ENCODE measurements at regions of chr12 and their contacts with region 1.

Region 1: DNA sequence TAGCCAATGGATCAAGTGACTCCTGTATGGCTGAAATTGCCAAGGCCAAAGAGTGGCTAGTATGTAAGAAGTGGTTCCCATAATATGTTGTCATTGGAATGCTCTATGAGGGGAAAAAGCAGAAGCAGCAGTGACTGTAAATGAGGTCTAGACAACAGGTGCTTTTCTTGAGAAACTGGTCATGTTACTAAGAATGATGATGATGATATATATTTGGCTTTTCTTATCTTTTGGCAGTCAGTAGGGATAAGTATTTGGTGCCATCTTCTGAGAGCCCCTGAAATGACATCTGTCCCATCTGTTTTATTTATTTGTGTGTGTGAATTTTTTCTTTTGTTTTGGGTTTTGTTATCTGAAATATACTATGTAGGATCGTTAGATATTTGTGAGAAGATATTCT is 141.7 kb downstream of the SYT1 start:
- DNase-seq: no peak
- H3K4me3 ChIP-seq: no peak overlapping the region
- H3K27ac ChIP-seq: no peak overlapping the region
- H3K4me1 ChIP-seq: no peaks in the 10 kb centered on the region
- H3K27me3 ChIP-seq: no peaks in the 10 kb centered on the region
- CTCF ChIP-seq: no peak
- POLR2A ChIP-seq: no peak

Region 2: DNA sequence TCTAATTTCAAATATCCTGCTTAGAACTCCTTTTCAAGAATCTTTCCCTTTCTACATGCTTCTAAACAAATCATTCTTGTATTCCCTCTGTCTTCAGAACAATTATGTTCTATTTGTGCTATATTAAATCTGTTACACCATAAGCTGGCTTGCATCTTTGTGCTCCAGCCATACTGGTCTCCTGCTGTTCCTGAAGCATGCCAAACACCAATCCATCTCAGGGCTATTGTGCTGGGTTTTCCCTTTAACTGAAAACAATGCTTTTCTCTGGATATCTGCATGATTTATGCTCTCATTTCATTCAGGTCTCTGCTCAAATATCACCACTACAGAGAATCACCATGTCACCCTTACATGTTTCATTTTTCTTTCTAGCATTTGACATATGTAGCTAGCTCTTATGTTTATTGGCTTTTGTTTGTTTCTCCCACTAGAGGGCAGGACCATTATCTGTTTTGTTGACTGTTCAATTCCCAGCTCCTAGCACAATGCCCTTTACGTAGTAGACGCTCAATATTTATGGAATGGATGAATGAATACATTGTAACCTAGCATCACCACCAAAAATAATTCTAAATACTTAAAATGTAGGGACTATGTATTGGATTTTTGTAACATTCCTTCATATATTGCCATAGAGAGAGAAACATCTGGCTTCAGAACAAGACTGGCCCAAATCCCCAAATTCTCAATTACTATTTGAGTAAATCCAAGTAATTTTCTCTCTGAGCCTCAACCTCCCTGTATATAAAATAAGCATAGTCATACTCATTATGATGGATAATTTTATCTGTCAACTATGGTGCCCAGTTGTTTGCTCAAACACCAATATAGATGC is 443.7 kb before region 1 on chr12:
- CTCF ChIA-PET with region 1: interaction called, 4 read pairs
- POLR2A ChIA-PET with region 1: no interaction called
- dilution Hi-C with region 1: no loop called
- intact Hi-C with region 1: loop called (anchors 5 kb)
- DNase-seq: peak; percentile 46
- H3K4me3 ChIP-seq: no peak overlapping the region
- H3K27ac ChIP-seq: no peak overlapping the region
- H3K4me1 ChIP-seq: no peaks in the 10 kb centered on the region
- H3K27me3 ChIP-seq: peaks cover 5% of the 10 kb centered on the region in 2 experiments
- CTCF ChIP-seq: peak in 1 of 2 donors; percentile 32
- POLR2A ChIP-seq: no peak

Region 3: GRCh38 chr12:79069009-79069408 is 62.7 kb after region 1 on chr12:
- CTCF ChIA-PET with region 1: no interaction called
- POLR2A ChIA-PET with region 1: no interaction called
- dilution Hi-C with region 1: no loop called
- intact Hi-C with region 1: no loop called
- DNase-seq: no peak
- H3K4me3 ChIP-seq: no peak overlapping the region
- H3K27ac ChIP-seq: no peak overlapping the region
- H3K4me1 ChIP-seq: peaks cover under 1% of the 10 kb centered on the region
- H3K27me3 ChIP-seq: no peaks in the 10 kb centered on the region
- CTCF ChIP-seq: no peak
- POLR2A ChIP-seq: no peak

Measured in endothelial cell of umbilical vein (primary cell).